ENCODE measurements at regions of chr10 and their contacts with region 1.

Region 1: GRCh38 chr10:4131407-4132228 is 346.6 kb upstream of the KLF6 start:
- DNase-seq: peak; percentile 79
- ATAC-seq: peak; percentile 71
- H3K4me3 ChIP-seq: peak overlapping the region in 4 of 5 experiments; percentile 0 to 51 (median 32)
- H3K4me3 Mint-ChIP-seq: no peak overlapping the region
- H3K27ac ChIP-seq: peak overlapping the region; percentile 21 to 71
- H3K27ac Mint-ChIP-seq: no peak overlapping the region
- H3K4me1 ChIP-seq: peaks cover 70 to 71% of the 10 kb centered on the region in 2 donors
- H3K4me1 Mint-ChIP-seq: peaks cover 45% of the 10 kb centered on the region
- H3K27me3 ChIP-seq: no peaks in the 10 kb centered on the region
- H3K27me3 Mint-ChIP-seq: no peaks in the 10 kb centered on the region
- CTCF ChIP-seq: no peak

Region 2: DNA sequence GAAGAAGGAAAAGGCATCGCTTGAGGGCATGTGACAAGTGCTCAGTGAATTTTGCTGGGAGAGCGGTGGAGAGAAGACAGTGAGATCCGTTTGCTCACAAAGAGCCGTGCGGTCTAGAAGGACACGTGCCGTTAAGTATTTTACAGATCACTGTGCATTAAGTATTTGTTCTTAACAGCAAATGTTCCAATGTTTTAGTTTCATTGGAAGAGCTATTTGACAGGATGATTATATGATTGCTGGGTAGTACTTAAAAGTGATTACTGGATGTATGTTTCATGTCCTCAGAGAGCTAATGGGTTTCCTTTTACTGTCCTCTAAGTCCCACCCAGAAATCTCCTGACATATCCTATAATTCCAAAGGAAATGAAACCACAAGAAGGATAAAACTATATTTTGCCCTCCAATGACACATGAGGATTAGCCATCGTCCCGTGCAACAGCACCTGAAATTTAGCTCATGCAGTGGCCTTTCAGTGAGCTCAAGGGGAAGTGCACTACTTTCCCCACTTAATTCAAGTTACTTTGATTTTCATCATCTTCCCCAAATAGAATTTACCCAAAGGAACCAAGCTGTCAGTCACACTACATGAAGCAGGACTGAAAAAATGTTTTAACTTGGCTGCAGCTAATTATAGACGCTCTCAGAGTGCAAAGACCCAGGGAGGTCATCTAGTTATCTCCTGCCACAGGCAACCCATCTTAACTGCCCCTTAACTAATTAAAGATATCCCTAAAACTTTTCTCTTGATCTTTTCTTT is 426.9 kb before region 1 on chr10:
- CTCF ChIA-PET with region 1: no interaction called
- POLR2A ChIA-PET with region 1: no interaction called
- intact Hi-C with region 1: no loop called
- DNase-seq: no peak
- ATAC-seq: no peak
- H3K4me3 ChIP-seq: no peak overlapping the region
- H3K4me3 Mint-ChIP-seq: no peak overlapping the region
- H3K27ac ChIP-seq: no peak overlapping the region
- H3K27ac Mint-ChIP-seq: no peak overlapping the region
- H3K4me1 ChIP-seq: peaks cover 0 to 5% of the 10 kb centered on the region in 2 donors
- H3K4me1 Mint-ChIP-seq: peaks cover 8% of the 10 kb centered on the region
- H3K27me3 ChIP-seq: no peaks in the 10 kb centered on the region
- H3K27me3 Mint-ChIP-seq: no peaks in the 10 kb centered on the region
- CTCF ChIP-seq: no peak

Region 3: DNA sequence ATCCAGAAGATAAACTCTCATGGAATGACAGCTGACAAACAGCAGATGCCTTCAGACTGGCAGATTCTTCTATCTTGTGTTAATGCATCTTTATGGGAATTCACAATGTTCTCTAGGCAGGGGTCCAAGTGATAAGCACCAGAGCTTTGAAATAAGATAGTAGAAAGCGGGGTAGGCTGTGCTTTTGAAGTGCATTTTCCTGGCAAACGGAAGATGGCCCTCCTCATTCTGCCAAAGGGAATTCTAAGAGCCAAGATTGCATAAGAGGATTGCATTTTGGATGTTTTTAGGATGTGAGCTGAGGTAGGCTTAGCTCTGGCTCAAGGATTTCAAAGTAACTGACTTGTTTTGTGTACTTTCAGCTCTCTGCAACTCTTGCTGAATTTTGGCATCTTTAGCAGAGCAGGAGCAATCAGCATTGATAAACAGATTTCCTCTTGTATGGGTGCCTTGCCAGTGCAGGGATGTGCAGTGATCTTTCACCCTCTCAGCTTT is 48.1 kb before region 1 on chr10:
- CTCF ChIA-PET with region 1: no interaction called
- POLR2A ChIA-PET with region 1: no interaction called
- intact Hi-C with region 1: no loop called
- DNase-seq: no peak
- ATAC-seq: no peak
- H3K4me3 ChIP-seq: no peak overlapping the region
- H3K4me3 Mint-ChIP-seq: no peak overlapping the region
- H3K27ac ChIP-seq: no peak overlapping the region
- H3K27ac Mint-ChIP-seq: no peak overlapping the region
- H3K4me1 ChIP-seq: peaks cover 9 to 12% of the 10 kb centered on the region in 2 donors
- H3K4me1 Mint-ChIP-seq: peaks cover 15% of the 10 kb centered on the region
- H3K27me3 ChIP-seq: no peaks in the 10 kb centered on the region
- H3K27me3 Mint-ChIP-seq: no peaks in the 10 kb centered on the region
- CTCF ChIP-seq: no peak

Region 4: DNA sequence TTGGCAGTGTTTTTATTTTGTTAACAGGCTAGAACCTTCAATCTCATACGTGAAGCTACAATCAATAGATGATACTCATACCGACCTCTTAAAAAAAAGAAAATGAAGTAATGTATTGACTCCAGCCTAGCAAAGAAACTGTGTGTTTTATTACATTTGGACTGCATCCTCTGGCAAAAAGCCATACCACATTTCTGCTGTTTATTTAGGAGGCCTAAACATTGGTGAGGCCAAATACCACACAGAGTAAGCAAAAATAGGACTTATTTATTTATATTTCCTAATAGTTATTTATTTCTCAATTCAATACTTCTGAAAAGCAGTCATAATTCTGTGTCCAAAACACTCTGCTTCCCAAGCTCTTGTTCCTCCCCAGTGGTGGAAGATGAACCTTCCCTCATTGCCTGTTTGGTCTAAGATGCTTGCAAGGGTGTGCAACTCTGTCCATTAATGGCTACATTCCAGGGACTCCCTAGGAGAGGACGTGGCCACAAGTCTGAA is 52.2 kb after region 1 on chr10:
- CTCF ChIA-PET with region 1: no interaction called
- POLR2A ChIA-PET with region 1: interaction called, 5 read pairs
- intact Hi-C with region 1: loop called (anchors 10 kb)
- DNase-seq: no peak
- ATAC-seq: no peak
- H3K4me3 ChIP-seq: no peak overlapping the region
- H3K4me3 Mint-ChIP-seq: no peak overlapping the region
- H3K27ac ChIP-seq: no peak overlapping the region
- H3K27ac Mint-ChIP-seq: no peak overlapping the region
- H3K4me1 ChIP-seq: peaks cover 3 to 8% of the 10 kb centered on the region in 2 donors
- H3K4me1 Mint-ChIP-seq: peaks cover 18% of the 10 kb centered on the region
- H3K27me3 ChIP-seq: no peaks in the 10 kb centered on the region
- H3K27me3 Mint-ChIP-seq: no peaks in the 10 kb centered on the region
- CTCF ChIP-seq: no peak

Region 5: GRCh38 chr10:4333459-4333894 is 201.9 kb after region 1 on chr10:
- CTCF ChIA-PET with region 1: no interaction called
- POLR2A ChIA-PET with region 1: no interaction called
- intact Hi-C with region 1: loop called (anchors 5 kb)
- DNase-seq: no peak
- ATAC-seq: peak; percentile 46
- H3K4me3 ChIP-seq: no peak overlapping the region
- H3K4me3 Mint-ChIP-seq: no peak overlapping the region
- H3K27ac ChIP-seq: peak overlapping the region; percentile 84 to 96
- H3K27ac Mint-ChIP-seq: no peak overlapping the region
- H3K4me1 ChIP-seq: peaks cover 3% of the 10 kb centered on the region in 2 donors
- H3K4me1 Mint-ChIP-seq: no peaks in the 10 kb centered on the region
- H3K27me3 ChIP-seq: no peaks in the 10 kb centered on the region
- H3K27me3 Mint-ChIP-seq: no peaks in the 10 kb centered on the region
- CTCF ChIP-seq: peak; percentile 5